HEK293T (cell line): ENCODE measurements at regions of chr18 and their contacts with region 1.

Region 1: DNA sequence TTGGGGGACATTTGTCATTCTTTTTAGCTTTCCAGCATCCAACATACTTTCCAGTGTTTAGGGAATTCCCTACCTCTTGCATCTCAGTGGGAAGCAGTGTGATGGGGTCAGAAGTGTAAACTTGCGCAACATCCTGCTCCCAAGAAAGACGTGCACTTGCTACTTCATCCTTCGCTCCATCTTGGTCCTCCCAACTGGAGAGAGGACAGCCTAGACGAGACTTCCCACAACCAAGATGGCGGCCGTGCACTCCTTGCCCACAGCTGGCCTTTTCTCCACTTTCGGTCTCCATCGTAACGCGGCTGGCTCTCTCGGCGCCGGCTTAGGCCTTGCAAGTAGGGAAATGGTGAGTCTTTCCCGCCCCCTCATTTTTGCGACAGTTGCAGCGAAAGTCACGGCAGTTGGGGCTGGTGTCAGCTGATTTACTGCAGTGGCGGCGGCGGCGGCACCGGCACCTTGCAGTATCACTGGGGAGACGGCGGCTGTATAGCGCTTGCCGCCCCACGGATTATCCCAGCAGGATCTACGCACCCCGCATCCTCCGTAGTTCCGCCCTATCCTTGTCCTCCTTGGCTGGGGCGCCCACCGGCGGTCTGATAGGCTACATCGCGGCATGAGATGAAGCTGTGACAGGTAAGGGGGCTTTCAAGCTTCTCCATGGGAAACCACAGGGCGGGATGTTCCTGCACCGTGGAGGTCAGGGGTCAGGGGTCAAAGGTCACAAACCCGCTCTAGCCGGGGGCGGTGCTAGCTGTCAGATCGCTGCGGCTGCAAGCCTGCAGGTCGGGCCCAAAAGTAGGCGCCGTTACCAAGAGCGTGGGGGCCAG is at the start of gene WDR7:
- DNase-seq: peak; percentile 75

Region 2: DNA sequence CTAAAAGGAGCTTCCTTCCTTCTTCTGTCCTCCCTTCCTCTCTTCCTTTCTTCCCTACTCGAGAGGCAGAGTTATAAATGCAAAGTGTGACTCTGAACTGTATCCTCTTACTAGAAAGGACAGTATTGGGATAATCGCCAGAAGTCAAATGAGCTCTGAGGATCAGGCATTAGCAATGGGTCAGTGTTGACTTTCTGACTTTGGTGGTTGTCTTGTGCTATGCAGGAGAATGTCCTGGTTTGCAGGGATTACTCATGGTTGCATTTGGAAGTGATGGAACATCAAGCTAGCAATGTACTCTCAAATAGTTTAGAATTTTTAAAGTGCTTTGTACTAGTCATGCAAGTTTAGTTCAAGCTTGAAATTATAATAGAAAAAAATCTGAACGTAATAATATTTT is 128.3 kb before region 1 on chr18:
- CTCF ChIA-PET with region 1: no interaction called
- POLR2A ChIA-PET with region 1: no interaction called
- DNase-seq: no peak

Region 3: GRCh38 chr18:56598422-56598821 is 52.7 kb before region 1 on chr18:
- CTCF ChIA-PET with region 1: no interaction called
- POLR2A ChIA-PET with region 1: no interaction called
- DNase-seq: no peak

Region 4: GRCh38 chr18:56638271-56639093 is 12.7 kb before region 1 on chr18 and contains the start of gene TXNL1:
- CTCF ChIA-PET with region 1: interaction called, 5 read pairs
- POLR2A ChIA-PET with region 1: interaction called, 22 read pairs
- DNase-seq: peak; percentile 93

Region 5: GRCh38 chr18:56770873-56771272 is 119.7 kb after region 1 on chr18:
- CTCF ChIA-PET with region 1: no interaction called
- POLR2A ChIA-PET with region 1: no interaction called
- DNase-seq: no peak